A673 (cell line): ENCODE measurements at regions of chr6 and their contacts with region 1.

Region 1: DNA sequence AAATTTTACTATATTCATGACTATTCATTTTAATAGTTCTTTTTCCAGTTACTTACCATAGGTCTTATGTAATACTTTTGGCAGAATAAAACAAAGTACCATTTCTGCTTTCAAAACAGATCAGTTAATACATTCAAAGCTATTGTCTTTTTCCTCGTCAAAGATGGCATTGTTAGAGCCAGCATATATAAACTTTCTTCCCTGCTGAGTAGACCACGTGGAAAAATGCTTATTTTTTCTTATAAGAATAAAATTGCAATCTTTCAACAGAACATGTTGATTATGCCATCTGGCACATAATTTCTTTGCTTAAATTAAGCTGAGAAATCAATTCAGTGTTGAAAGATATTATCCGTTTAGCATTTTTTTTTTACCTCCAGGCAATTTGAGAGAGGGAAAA is 34.9 kb upstream of the EXOC2 start:
- DNase-seq: no peak
- H3K4me3 ChIP-seq: no peak overlapping the region
- H3K27ac ChIP-seq: no peak overlapping the region
- H3K4me1 ChIP-seq: no peaks in the 10 kb centered on the region
- H3K27me3 ChIP-seq: peaks cover 79% of the 10 kb centered on the region
- CTCF ChIP-seq: no peak

Region 2: DNA sequence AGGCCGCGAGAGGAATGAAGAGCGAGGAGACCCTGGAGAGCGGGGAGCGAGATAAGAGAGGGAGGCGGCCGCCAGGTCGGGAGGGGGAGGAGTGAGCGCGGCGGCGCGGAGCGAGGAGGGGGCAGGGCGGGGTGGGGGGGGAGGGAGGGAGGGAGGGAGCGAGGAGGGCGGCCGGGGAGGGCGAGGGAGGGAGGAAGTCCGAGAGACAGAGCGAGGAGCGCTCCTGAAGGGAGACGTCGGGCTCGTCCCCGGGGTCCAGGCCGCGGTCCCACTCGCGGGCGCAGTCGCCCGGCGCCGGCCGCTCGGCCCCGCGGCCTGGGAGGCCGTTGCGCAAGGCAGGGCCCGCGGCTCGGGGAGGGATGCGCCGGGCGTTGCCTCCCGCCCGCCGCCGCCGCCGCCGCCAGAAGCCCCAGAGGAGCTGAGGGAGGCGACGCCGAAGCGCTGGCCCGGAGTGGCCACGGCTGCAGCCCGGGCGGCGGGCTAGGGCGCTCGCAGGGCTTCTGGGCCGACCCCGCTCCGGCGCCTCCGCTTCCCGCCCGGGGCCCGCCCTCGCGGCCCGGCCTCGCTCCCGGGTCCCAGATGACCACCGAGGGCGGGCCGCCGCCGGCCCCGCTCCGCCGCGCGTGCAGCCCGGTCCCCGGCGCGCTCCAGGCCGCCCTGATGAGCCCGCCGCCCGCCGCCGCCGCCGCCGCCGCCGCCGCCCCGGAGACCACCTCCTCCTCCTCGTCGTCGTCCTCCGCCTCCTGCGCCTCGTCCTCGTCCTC is 661.7 kb after region 1 on chr6 and contains the start of gene FOXF2:
- CTCF ChIA-PET with region 1: no interaction called
- POLR2A ChIA-PET with region 1: no interaction called
- intact Hi-C with region 1: loop called (anchors 5 kb)
- DNase-seq: no peak
- H3K4me3 ChIP-seq: peak within 1 kb of the TSS; percentile 38
- H3K27ac ChIP-seq: no peak within 1 kb of the TSS
- H3K4me1 ChIP-seq: no peaks in the 10 kb centered on the region
- H3K27me3 ChIP-seq: peaks cover 75% of the 10 kb centered on the region
- CTCF ChIP-seq: no peak
- total RNA-seq, gene FOXF2: 0.13 TPM in 2 replicates

Region 3: DNA sequence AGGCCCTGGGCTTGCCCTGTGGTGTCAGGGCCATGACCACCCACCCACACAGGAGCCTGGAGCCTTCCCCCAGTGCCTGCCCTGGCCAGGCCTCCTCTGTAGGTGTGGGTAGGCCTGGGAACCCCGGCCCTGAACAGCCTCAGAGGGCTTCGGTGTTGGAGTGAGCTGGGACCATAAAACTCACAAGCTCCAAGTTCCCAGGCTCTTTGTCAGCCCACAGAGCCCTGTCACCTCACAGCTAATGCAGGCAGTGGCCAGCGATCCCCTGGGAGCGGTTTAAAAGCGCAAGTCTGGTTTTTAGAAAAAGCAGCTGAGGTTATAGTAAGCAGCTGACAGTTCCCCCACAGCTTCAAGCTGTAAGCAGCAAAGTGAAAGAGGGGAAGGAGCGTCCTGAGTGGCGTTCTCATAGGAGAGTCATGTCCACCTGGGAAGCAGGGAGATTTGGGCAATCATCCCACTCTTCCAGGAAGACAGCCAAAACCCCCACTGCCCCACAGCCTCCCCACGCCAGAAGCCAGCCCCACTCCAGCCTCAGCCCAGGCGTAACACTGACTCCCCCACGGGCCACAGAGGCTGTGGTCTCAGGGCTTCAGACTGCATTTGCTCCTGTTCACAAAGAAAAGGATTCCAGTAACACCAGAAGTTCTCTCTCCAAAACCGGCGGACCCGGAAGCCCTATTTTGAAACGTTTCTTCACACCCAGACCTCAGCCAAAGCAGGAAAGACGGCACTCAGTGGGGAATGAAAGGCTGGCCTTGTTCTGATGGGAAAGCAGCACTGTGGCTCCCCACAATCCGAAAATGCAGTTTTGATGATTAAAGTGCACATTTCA is 847.6 kb after region 1 on chr6:
- CTCF ChIA-PET with region 1: no interaction called
- POLR2A ChIA-PET with region 1: no interaction called
- intact Hi-C with region 1: no loop called
- DNase-seq: no peak
- H3K4me3 ChIP-seq: no peak overlapping the region
- H3K27ac ChIP-seq: no peak overlapping the region
- H3K4me1 ChIP-seq: no peaks in the 10 kb centered on the region
- H3K27me3 ChIP-seq: no peaks in the 10 kb centered on the region
- CTCF ChIP-seq: no peak